Mammary epithelial cell (primary cell): ENCODE measurements at regions of chr14 and their contacts with region 1.

Region 1: DNA sequence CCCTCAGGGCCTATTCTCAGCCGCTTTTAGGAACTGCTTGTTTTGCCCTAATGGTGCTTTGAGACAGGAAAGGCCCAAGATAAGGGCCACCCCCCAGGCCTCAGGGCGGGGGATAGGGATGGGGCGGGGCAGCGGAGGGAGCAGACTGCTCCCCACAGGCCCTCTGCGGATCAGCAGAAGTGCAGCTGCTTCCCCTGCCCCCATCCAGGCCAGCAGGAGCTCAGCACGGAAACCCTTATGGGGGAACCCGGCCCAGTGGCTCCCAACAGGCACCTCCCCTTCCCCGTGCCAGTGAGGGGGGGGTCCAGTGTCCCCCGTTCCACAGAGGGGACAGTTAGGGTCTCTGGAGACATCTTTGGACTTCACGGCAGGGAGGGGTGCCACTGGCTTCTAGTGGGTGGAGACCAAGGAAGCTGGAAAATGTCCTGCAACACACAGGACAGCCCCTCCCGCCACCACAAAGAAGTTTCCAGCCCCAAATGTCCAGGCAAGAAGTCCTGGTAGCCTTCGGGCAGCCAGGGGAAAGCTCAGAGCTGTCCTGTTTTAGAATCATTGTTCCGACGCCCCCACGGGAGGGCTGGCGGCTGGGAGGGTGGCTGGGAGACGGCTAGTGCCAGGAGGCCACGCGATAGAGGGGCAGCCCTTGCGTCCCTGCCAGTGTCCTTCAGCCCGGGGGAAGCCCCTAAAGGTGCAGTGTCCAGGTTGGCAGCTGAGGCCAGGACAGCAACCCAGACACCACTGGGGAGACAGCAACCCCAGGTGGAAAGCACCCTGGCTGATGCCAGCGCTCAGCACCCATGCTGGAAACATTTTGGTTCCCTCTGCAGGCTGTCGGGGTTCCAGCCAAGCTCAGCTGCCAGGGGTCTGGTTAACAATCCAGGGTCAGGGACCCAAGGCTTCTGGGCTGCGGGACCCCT is 10.4 kb upstream of the GPR132 start:
- DNase-seq: no peak
- H3K4me3 ChIP-seq: no peak overlapping the region
- H3K27ac ChIP-seq: no peak overlapping the region
- H3K4me1 ChIP-seq: peaks cover 9% of the 10 kb centered on the region
- H3K27me3 ChIP-seq: no peaks in the 10 kb centered on the region
- CTCF ChIP-seq: no peak

Region 2: GRCh38 chr14:104985675-104986525 is 89.7 kb before region 1 on chr14 and contains the start of gene CLBA1:
- CTCF ChIA-PET with region 1: no interaction called
- dilution Hi-C with region 1: loop called (anchors 10 kb)
- in situ Hi-C with region 1: no loop called
- intact Hi-C with region 1: no loop called
- DNase-seq: peak; percentile 90
- H3K4me3 ChIP-seq: peak within 1 kb of the TSS; percentile 58 to 86 (median 77)
- H3K27ac ChIP-seq: peak within 1 kb of the TSS; percentile 86
- H3K4me1 ChIP-seq: peaks cover 23% of the 10 kb centered on the region
- H3K27me3 ChIP-seq: no peaks in the 10 kb centered on the region
- CTCF ChIP-seq: no peak
- total RNA-seq, gene CLBA1: 11.0 to 14.7 TPM

Region 3: DNA sequence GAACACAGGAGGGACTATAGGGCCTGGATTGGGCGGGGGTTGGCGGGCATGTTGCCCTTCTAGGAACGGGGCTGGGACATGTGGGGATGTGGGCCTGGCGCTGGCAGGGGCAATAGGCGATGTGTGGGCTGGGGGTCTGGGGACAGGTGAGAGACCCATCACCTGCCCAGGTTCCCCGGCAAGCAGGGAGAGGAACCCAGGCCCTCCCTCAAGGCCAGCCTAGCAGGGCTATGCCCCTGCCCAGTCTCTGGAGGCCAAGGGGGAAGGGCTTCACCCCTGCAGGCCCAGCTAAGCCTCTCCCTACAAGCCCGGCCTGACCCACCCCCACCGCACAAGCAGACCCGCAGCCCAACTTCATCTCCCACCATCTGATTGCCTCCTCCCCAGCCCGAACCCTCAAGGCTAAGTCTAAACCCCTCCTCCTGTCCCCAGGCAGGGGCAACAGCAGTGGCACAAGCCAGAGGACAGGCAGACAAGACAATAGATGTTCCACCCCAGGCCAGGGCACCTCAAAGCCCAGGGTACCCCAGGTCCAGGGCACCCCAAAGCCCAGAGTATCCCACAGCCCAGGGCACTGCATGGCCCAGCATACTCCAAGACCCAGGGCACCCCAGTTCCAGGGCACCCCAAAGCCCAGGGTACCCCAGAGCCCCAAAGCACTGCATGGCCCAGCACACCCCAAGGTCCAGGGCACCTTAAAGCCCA is 86.5 kb after region 1 on chr14:
- CTCF ChIA-PET with region 1: no interaction called
- dilution Hi-C with region 1: loop called (anchors 5 kb)
- in situ Hi-C with region 1: no loop called
- intact Hi-C with region 1: no loop called
- DNase-seq: no peak
- H3K4me3 ChIP-seq: no peak overlapping the region
- H3K27ac ChIP-seq: no peak overlapping the region
- H3K4me1 ChIP-seq: peaks cover 39% of the 10 kb centered on the region
- H3K27me3 ChIP-seq: no peaks in the 10 kb centered on the region
- CTCF ChIP-seq: no peak

Region 4: DNA sequence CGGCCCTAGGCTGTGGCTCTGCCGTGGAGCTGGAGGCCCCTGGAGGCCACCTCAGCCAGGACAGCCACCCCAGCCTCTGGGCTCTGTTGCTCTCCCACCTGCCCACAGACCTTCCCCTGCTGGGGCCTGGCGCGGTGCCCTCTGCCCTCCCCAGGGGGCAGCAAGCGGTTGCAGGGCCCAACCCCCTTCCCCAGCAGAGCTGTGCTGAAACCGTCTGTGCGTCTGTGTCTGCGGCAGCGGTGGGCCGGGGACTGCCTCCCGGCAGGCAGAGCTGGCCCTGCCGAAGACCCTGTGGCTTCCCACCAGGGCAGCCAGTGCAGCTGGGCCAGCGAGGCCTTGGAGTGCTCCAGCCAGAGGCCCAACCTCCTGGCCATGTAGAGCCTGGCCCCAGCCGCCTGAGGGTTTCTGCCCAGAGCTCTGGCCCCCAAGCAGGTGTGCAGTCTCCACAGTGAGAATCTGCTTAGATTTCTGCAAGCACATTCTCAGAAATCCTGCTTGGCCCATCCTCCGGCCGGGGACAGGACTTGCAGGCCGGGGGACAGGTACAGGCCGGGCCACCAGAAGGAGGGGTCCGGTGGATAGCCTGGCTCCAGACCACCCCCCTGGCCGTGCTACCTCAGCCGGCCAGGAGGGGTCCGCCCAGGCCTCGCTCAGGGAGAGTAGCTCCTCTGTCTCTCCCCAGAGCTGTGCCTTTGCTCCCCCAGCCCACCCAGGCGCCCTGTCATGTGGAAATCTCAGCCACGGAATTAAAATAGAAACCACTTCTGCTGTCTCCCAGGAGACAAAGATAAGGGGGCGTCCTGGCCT is 395.4 kb after region 1 on chr14:
- CTCF ChIA-PET with region 1: no interaction called
- dilution Hi-C with region 1: no loop called
- in situ Hi-C with region 1: no loop called
- intact Hi-C with region 1: no loop called
- DNase-seq: no peak
- H3K4me3 ChIP-seq: no peak overlapping the region
- H3K27ac ChIP-seq: no peak overlapping the region
- H3K4me1 ChIP-seq: peaks cover 44% of the 10 kb centered on the region
- H3K27me3 ChIP-seq: no peaks in the 10 kb centered on the region
- CTCF ChIP-seq: no peak